Pancreas (tissue), 10 donors: ENCODE measurements at regions of chr6 and their contacts with region 1.

Region 1: DNA sequence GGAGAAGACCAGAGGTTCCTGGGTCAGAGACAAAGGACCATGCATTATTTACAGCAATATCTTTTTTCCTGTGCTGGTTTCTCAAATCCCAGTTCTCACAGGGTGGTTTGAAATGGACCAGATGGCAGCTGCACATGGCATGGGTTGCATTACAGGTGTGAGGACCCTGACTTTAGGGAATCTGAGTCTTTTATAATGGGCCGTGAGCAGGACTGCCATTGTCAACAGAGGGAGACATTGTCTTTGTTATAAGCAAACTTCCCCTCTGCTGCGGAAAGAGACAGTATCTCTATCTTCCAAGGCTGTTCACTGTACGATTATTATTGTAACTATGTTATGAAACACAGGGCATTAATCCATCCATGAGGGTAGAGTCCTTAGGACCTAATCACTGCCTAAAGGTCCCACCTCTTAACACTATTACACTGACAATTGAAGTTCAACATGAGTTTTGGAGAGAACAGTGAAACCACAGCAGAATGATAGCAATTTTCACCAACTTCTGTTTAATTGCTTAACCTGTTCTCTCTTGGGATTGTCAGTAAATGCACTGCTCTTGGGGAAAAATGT is 156.1 kb upstream of the AGPAT4 start:
- DNase-seq: no peak
- ATAC-seq: no peak
- H3K4me3 ChIP-seq: no peak overlapping the region
- H3K27ac ChIP-seq: no peak overlapping the region
- H3K4me1 ChIP-seq: peaks cover 0 to 7% (median 5%) of the 10 kb centered on the region in 3 donors
- H3K27me3 ChIP-seq: no peaks in the 10 kb centered on the region
- CTCF ChIP-seq: no peak

Region 2: DNA sequence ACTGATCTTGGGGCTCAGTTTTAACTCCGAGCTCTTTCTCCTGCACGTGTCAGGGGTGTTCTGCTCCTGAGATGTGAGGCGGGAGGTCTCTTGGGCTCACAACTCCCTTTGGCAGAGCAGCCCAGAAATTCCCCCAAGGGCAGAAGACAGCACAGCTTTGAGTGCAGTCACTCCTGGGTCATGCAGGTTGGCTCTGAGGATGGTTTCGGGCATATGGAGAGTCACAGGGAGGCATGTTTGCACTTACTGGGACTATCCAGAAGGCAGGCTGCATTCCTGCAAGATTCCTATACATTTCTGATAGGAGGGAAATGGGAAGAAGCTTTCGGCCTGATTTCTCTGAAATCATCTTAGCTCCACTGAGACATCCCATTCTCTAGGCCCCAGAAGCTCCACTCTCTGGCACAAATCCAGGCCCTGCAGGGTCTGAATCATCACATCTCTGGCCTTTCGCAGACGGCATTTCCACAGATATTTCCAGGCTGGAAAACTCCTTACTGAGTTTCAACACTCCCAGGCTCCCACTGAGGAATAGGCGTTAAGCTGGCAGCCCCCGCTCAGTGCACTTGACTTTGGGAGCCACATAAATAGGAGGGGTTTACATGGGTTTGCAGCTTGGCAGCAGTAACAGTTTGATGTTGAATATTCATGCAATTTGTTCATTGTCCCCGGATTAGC is 195.9 kb before region 1 on chr6:
- intact Hi-C with region 1: no loop called
- DNase-seq: peak in 3 of 6 donors; percentile 23 to 34 (median 32)
- ATAC-seq: peak in 2 of 4 donors; percentile 47 to 50
- H3K4me3 ChIP-seq: no peak overlapping the region
- H3K27ac ChIP-seq: no peak overlapping the region
- H3K4me1 ChIP-seq: peaks cover 0 to 5% (median 0%) of the 10 kb centered on the region in 3 donors
- H3K27me3 ChIP-seq: no peaks in the 10 kb centered on the region
- CTCF ChIP-seq: no peak

Region 3: GRCh38 chr6:161373905-161374451 is 56.0 kb before region 1 on chr6:
- intact Hi-C with region 1: no loop called
- DNase-seq: peak in 5 of 6 donors; percentile 31 to 91 (median 71)
- ATAC-seq: peak; percentile 57 to 75 (median 74)
- H3K4me3 ChIP-seq: no peak overlapping the region
- H3K27ac ChIP-seq: no peak overlapping the region
- H3K4me1 ChIP-seq: no peaks in the 10 kb centered on the region
- H3K27me3 ChIP-seq: no peaks in the 10 kb centered on the region
- CTCF ChIP-seq: peak; percentile 89 to 96 (median 95)

Region 4: GRCh38 chr6:161694995-161695394 is 265.0 kb after region 1 on chr6:
- intact Hi-C with region 1: loop called in 1 of 3 experiments (anchors 10 kb)
- DNase-seq: peak in 1 of 6 donors; percentile 16
- ATAC-seq: peak; percentile 53 to 83 (median 70)
- H3K4me3 ChIP-seq: no peak overlapping the region
- H3K27ac ChIP-seq: no peak overlapping the region
- H3K4me1 ChIP-seq: peaks cover 0 to 12% (median 0%) of the 10 kb centered on the region in 3 donors
- H3K27me3 ChIP-seq: no peaks in the 10 kb centered on the region
- CTCF ChIP-seq: peak in 3 of 4 donors; percentile 26 to 31 (median 28)